Activated CD4-positive, alpha-beta T cell treated with anti-CD3 and anti-CD28 coated beads, Interleukin-2, amount 10 ng/mL, durations not matched to agents 24 days and 14 days (primary cell): ENCODE measurements at regions of chr9 and their contacts with region 1.

Region 1: DNA sequence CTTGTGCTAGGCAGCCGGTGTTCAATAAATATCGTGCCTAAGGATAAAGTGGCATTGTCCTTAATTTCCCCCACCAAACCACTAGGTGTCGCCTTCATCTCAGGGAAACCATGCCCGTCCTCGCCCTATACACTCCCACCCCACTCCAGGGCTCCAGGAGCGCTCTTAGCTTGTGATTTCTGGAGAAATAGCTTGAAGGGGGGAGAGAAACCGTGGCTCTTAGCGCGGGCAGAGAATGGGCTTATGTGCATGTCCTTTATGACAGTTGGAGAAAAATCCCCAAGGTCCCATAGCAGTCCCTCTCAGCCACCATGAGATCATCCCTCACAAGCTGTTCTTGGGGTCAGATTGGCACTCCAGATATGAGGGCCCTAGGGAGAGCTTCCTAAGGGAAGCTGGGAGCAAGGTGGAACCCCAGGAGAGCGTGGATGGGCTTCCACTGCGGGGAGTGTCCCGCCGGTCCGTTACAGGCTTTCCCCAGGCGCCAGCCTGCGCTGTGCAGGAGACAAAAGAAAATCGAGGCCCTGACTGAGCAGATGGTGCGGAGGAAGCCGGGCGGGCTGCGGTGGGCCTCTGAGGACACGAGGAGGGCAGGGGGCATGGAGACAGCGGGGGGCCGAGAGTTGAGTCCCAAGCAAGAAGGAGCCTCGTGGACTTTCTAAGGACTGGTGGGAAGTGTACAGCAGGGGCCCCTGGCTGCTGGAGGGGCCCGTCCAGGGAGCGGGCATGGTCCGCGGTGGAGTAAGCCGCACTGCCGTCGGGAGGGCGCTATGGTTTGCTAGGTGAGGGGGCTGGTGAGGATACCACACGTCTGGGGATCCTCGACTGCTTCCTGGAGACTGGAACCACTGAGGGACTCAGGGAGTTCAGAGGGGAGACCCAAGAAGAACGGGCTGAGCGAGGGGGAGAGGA is 750 bp upstream of the NPR2 start:
- DNase-seq: peak; percentile 87
- H3K4me3 Mint-ChIP-seq: no peak overlapping the region
- H3K27ac Mint-ChIP-seq: no peak overlapping the region
- H3K4me1 Mint-ChIP-seq: peaks cover 17% of the 10 kb centered on the region
- H3K27me3 Mint-ChIP-seq: no peaks in the 10 kb centered on the region

Region 2: GRCh38 chr9:35829084-35829763 is 38.6 kb after region 1 on chr9 and contains the start of gene TMEM8B:
- intact Hi-C with region 1: loop called (anchors 2 kb)
- DNase-seq: peak; percentile 97
- H3K4me3 Mint-ChIP-seq: peak within 1 kb of the TSS; percentile 93
- H3K27ac Mint-ChIP-seq: peak within 1 kb of the TSS; percentile 86
- H3K4me1 Mint-ChIP-seq: peaks cover 29% of the 10 kb centered on the region
- H3K27me3 Mint-ChIP-seq: peaks cover 6% of the 10 kb centered on the region
- total RNA-seq, gene TMEM8B: 2.0 and 2.3 TPM in 2 replicates

Region 3: DNA sequence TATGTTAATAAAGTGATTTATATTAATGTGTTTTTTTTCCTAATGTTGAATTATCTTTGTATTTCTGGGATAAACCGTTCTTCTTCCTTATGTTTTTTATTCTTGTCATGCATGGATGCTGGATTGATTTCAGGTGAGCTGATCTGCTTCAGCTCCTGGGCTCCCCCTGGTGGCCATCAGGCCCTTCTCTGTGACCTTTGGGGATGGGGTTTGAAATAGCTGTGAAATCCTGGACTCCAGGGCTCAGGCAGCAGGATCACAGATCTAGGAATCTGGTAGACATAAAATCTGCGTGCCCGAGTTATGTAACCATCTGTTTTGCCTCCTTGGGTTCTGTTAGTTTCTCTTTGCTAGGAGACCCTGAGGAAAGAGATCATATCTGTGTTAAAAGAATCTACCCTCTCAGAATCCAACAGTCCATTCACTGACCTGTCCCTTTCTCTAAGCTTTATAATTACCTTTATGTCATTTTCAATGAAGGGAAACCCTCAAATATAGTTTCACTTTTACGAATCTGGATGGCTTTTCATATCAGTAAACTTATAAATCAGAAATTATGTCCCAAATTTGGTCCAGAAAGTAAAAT is 91.7 kb after region 1 on chr9:
- intact Hi-C with region 1: loop called (anchors 1 kb)
- DNase-seq: peak; percentile 93
- H3K4me3 Mint-ChIP-seq: no peak overlapping the region
- H3K27ac Mint-ChIP-seq: no peak overlapping the region
- H3K4me1 Mint-ChIP-seq: no peaks in the 10 kb centered on the region
- H3K27me3 Mint-ChIP-seq: peaks cover 46% of the 10 kb centered on the region